ENCODE measurements at regions of chr16 and their contacts with region 1.

Region 1: DNA sequence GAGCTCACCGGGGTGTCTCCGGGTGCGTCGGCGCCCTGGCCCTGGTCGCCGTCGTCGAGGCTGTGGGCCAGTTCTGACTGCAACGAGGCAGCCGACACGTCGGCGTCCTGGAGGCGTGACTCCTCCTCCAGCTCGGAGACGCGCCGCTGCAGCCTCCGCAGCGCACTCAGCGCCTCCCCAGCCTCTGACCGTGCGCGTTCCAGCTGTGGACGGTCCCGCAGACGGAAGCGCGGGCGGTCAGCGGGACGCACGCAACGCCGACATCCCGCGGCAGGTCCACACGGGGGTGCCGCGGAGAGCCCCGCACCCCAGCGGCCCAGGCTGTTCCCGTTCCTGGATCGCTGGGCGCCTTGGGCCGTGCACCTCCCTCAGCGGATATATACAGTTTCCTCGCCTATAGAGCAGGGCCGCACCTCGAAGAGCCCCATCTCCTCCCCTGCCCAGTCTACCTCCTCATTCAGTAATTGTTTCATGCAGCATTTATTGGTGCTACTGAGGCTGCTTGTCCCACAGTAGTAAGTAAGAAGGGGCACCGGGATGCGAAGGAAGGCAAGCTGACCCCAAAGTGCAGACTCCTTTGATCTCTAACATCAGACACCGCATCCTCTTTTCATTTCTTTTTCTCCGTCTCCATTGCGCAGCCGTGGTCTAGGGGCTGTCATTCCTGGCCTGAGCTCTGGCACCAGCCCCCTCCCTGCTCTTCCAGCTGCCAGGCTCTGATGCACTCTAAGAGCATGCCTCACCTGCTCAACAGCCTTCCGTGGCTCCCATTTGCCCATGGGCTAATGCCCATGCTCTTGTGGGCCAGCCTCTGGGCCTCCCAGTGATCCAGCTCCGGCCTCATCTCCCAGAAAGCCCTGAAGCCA is 5.9 kb downstream of the THOC6 start:
- DNase-seq: no peak
- ATAC-seq: no peak
- H3K4me3 ChIP-seq: no peak overlapping the region
- H3K27ac ChIP-seq: no peak overlapping the region
- H3K4me1 ChIP-seq: peaks cover 14% of the 10 kb centered on the region
- CTCF ChIP-seq: no peak
- EP300 ChIP-seq: no peak
- POLR2A ChIP-seq: no peak
- RAD21 ChIP-seq: no peak

Region 2: DNA sequence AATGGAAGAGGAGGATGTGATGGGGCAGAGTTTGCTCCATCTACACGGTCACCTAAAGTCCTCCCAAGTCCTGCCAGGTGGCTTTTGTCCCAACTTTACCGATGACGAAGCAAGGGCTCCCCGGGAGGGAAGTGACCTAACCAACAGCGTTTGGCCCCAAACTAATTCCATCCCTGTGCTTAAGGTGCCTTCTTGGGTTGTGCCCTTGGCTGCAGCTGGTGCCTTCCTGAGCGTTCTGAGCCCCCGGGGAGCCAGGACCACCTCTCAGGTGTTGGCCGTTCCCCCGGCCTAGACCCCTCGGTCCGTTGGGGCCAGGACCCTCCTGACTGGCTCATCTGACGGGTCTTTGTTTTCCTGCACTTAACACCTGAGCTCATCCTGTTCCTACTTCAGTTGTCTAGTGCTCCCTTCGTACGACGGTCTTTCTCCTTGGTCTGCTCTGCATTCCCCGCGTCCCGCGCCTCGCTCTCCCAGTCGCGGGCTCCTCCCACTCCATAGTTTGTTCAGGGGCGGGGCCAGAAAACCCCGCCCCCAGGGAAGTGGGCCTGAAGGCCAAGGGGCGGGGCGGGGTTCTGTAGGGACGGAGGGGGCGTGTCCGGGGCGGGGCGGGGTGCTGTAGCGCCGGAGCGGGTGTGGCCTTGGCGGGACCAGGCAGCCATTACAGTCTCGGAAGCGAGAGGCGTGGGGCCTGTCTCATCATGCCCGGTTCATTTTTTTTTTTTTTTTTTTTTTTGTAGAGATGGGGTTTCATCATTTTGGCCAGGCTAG is 70.1 kb after region 1 on chr16:
- CTCF ChIA-PET with region 1: interaction called, 10 read pairs
- POLR2A ChIA-PET with region 1: no interaction called
- DNase-seq: peak; percentile 80 to 92
- ATAC-seq: peak; percentile 75 to 87
- H3K4me3 ChIP-seq: peak overlapping the region; percentile 34; the same call in 2 of the 3 replicates
- H3K27ac ChIP-seq: peak overlapping the region; percentile 69 to 78
- H3K4me1 ChIP-seq: peaks cover 15% of the 10 kb centered on the region
- CTCF ChIP-seq: no peak
- EP300 ChIP-seq: no peak
- POLR2A ChIP-seq: no peak
- RAD21 ChIP-seq: no peak